Calu3 (cell line): ENCODE measurements at regions of chr2 and their contacts with region 1.

Region 1: GRCh38 chr2:219689676-219690628 is 62.5 kb downstream of the SLC4A3 start:
- DNase-seq: peak; percentile 75
- H3K4me3 Mint-ChIP-seq: no peak overlapping the region
- H3K27ac Mint-ChIP-seq: peak overlapping the region; percentile 100
- H3K4me1 Mint-ChIP-seq: peaks cover 36% of the 10 kb centered on the region
- H3K27me3 Mint-ChIP-seq: no peaks in the 10 kb centered on the region
- CTCF ChIP-seq: peak; percentile 68

Region 2: DNA sequence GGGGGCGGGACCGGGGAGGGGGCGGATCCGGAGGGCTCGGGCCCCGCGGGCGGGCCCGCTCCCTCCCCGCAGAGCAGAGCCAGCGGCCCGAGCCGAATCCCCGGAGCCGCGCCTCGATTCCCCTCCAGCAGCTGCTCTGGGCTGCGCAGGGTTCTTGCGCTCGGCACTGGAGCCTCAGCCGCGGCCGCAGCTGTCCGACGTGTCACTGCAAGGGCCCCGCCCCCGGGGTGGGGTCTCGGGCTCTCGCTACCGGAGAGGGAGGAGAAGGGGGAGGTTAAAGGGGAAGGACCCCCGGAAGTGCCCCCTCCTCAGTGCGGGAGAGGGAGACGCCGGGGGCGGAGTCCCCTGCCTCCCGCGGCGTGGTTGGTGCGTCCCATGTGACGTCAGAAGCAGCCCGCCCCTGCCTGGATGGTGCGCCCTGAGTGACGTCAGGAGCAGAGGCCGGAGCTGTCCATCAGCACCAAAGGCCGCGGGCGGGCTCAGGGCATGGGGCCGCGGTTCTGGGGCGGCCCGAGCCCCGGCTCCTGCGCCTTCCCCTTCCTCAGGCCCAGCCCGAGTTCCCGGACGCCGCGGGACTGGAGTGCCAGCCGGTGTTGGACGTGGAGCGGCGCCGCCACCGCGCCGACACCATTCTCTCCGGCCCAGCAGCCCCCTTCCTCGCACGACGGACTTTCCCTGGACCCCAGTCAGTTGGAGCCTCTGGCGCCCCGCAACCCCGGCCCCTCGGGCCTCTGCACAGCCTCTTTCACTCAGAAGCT is 146.2 kb before region 1 on chr2 and contains the starts of genes CHPF and TMEM198:
- CTCF ChIA-PET with region 1: interaction called, 6 read pairs
- intact Hi-C with region 1: loop called (anchors 1 kb)
- DNase-seq: peak; percentile 98
- H3K4me3 Mint-ChIP-seq: peak within 1 kb of the TSS; percentile 91
- H3K27ac Mint-ChIP-seq: peak within 1 kb of the TSS; percentile 97
- H3K4me1 Mint-ChIP-seq: peaks cover 20% of the 10 kb centered on the region
- H3K27me3 Mint-ChIP-seq: peaks cover 30% of the 10 kb centered on the region
- CTCF ChIP-seq: no peak
- total RNA-seq, gene CHPF: 139 and 141 TPM in 2 replicates
- total RNA-seq, gene TMEM198: 5.2 and 5.9 TPM in 2 replicates

Region 3: GRCh38 chr2:219554350-219554749 is 135.6 kb before region 1 on chr2:
- CTCF ChIA-PET with region 1: no interaction called
- intact Hi-C with region 1: no loop called
- DNase-seq: no peak
- H3K4me3 Mint-ChIP-seq: no peak overlapping the region
- H3K27ac Mint-ChIP-seq: no peak overlapping the region
- H3K4me1 Mint-ChIP-seq: no peaks in the 10 kb centered on the region
- H3K27me3 Mint-ChIP-seq: no peaks in the 10 kb centered on the region
- CTCF ChIP-seq: no peak

Region 4: GRCh38 chr2:219569050-219569449 is 120.9 kb before region 1 on chr2:
- CTCF ChIA-PET with region 1: no interaction called
- intact Hi-C with region 1: no loop called
- DNase-seq: no peak
- H3K4me3 Mint-ChIP-seq: no peak overlapping the region
- H3K27ac Mint-ChIP-seq: no peak overlapping the region
- H3K4me1 Mint-ChIP-seq: peaks cover 9% of the 10 kb centered on the region
- H3K27me3 Mint-ChIP-seq: no peaks in the 10 kb centered on the region
- CTCF ChIP-seq: no peak

Region 5: DNA sequence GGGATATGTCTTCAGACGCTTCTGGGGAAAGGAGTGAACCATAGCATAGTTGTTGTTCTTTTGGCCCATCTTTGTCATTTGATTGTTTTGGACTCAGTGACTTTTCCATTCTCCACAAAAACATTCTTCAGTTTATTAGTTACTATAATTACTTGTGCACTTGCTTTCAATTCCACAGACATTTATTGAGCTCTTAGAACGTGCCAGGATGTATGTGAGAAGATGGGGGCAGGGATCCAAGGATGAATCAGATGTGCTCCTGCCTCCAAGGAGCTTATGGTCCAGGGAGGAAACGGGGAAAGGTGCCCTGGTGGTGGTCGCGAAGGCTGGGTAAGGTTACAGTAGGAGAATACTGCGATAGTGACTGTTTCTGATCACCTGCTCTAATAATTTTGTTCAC is 69.4 kb before region 1 on chr2:
- CTCF ChIA-PET with region 1: interaction called, 11 read pairs
- intact Hi-C with region 1: no loop called
- DNase-seq: no peak
- H3K4me3 Mint-ChIP-seq: no peak overlapping the region
- H3K27ac Mint-ChIP-seq: no peak overlapping the region
- H3K4me1 Mint-ChIP-seq: peaks cover 6% of the 10 kb centered on the region
- H3K27me3 Mint-ChIP-seq: peaks cover 9% of the 10 kb centered on the region
- CTCF ChIP-seq: no peak

Region 6: DNA sequence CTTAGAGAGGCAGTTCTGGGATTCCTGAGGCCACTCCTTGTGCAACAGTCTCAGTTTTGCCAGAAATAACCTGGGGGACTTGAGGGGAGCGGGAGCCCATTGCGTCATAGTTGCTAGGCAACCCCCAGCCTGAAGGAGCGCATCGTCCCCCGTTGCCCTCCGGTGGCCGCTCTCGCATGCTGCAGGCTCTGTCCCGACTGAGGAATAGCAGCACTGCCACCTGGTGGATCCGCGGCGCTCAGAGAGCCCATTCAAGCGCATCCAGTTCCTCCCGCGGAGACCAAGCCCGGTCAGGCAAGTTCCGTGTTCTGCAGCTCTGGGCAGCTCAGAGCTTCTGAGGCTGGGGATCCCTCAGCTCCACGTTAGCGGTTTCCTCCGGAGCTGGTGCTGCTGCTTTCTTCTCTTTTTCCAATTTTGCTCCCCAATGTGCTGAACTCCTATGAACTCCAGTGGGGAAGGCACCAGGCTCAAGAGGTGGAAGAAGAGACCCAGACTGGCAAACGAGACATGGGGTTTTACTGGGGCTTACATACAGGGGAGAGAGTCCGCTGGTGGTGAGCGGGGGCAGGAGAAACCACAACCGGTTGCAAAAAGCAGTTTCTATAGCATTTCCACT is 47.4 kb before region 1 on chr2:
- CTCF ChIA-PET with region 1: interaction called, 17 read pairs
- intact Hi-C with region 1: loop called (anchors 1 kb)
- DNase-seq: peak; percentile 97
- H3K4me3 Mint-ChIP-seq: peak overlapping the region; percentile 15
- H3K27ac Mint-ChIP-seq: peak overlapping the region; percentile 63
- H3K4me1 Mint-ChIP-seq: peaks cover 28% of the 10 kb centered on the region
- H3K27me3 Mint-ChIP-seq: no peaks in the 10 kb centered on the region
- CTCF ChIP-seq: peak; percentile 99

Region 7: DNA sequence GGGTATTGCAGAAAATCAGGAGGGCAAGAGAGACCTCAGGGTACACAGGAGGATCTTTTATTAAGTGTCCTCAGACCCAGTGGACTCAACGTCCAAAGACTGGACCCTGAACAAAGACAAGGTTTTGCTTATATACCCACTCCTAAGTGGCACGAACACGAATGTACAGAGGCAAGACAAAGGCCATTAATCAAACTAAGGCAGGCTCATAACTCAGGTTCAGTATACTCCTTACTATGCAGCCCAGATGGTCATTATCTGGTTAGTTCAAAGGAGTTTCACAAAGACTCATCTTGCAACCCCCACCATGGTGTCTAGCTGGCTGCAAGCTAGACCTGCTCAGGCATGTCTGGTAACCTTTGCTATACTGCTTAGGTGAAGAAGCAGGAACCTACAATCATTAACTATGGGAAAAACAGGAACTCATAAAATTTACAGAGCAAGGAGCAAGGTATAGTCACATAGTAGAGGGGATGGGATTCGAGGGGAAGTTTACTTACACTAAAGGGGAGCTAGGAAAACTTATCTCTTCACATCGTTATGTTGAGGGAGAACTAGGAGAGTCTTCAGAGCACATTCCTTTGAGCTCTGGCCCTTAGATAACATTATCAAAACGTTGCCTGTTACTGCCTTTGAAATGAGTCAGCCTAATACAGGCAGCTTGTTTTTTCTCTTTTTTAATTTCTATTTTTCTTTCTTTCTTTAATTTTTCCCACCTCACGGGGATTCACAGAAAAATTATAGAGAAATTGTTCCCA is 28.6 kb before region 1 on chr2:
- CTCF ChIA-PET with region 1: interaction called, 14 read pairs
- intact Hi-C with region 1: loop called (anchors 1 kb)
- DNase-seq: peak; percentile 39
- H3K4me3 Mint-ChIP-seq: peak overlapping the region; percentile 5
- H3K27ac Mint-ChIP-seq: peak overlapping the region; percentile 89
- H3K4me1 Mint-ChIP-seq: peaks cover 42% of the 10 kb centered on the region
- H3K27me3 Mint-ChIP-seq: no peaks in the 10 kb centered on the region
- CTCF ChIP-seq: no peak